ENCODE measurements at regions of chr20 and their contacts with region 1.

Region 1: GRCh38 chr20:22339091-22339881 is 245.1 kb downstream of the FOXA2 start:
- H3K4me3 Mint-ChIP-seq: no peak overlapping the region
- H3K27ac Mint-ChIP-seq: no peak overlapping the region
- H3K4me1 Mint-ChIP-seq: peaks cover 5% of the 10 kb centered on the region
- H3K27me3 Mint-ChIP-seq: peaks cover 16% of the 10 kb centered on the region

Region 2: GRCh38 chr20:22586645-22587310 is 247.5 kb after region 1 on chr20:
- intact Hi-C with region 1: loop called (anchors 1 kb)
- H3K4me3 Mint-ChIP-seq: no peak overlapping the region
- H3K27ac Mint-ChIP-seq: no peak overlapping the region
- H3K4me1 Mint-ChIP-seq: no peaks in the 10 kb centered on the region
- H3K27me3 Mint-ChIP-seq: peaks cover 81% of the 10 kb centered on the region

Region 3: DNA sequence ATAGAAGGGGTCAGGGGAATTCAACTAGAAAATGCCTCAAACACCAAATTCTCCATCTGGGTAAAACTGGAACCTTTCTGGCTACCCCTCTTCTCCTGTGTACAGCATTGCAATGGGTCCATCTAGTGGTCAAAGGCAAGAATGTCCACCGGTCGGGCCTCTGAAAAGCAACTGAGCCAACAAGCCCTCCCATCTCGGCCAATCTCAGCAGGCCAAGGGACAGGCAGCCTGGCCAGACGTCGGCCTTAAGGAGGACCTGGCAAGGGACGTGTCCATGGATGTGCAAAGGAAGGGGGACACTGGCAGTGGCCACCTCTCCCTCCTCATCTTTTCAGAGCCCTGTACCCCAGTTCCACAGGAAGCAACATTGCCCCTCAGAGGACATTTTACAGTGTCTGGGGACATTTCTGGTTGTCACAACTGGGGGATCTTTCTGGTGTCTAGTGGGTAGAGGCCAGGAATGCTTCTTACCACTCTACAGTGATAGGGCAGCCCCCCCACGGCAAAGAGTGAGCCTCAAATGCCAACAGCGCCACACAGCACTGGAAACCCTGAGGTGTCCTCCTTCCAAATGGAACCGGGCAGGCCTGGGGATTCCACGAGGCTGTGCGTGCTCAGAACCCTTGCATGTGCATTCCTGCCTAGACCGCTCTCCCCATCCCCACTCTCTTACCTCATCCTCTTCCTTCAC is 344.9 kb after region 1 on chr20:
- intact Hi-C with region 1: loop called (anchors 1 kb)
- H3K4me3 Mint-ChIP-seq: no peak overlapping the region
- H3K27ac Mint-ChIP-seq: peak overlapping the region; percentile 7
- H3K4me1 Mint-ChIP-seq: peaks cover 47% of the 10 kb centered on the region
- H3K27me3 Mint-ChIP-seq: peaks cover 12% of the 10 kb centered on the region